ENCODE measurements at regions of chr1 and their contacts with region 1.

Region 1: GRCh38 chr1:207876131-207876530 is 34.8 kb downstream of the CD34 start:
- DNase-seq: no peak
- ATAC-seq: no peak
- H3K4me3 ChIP-seq: no peak overlapping the region
- H3K4me3 Mint-ChIP-seq: no peak overlapping the region
- H3K27ac ChIP-seq: no peak overlapping the region
- H3K27ac Mint-ChIP-seq: no peak overlapping the region
- H3K4me1 ChIP-seq: peaks cover 29 to 30% of the 10 kb centered on the region in 2 donors
- H3K4me1 Mint-ChIP-seq: peaks cover 39% of the 10 kb centered on the region
- H3K27me3 ChIP-seq: no peaks in the 10 kb centered on the region
- H3K27me3 Mint-ChIP-seq: no peaks in the 10 kb centered on the region
- CTCF ChIP-seq: no peak

Region 2: GRCh38 chr1:207628776-207629175 is 247.4 kb before region 1 on chr1:
- CTCF ChIA-PET with region 1: no interaction called
- POLR2A ChIA-PET with region 1: no interaction called
- intact Hi-C with region 1: no loop called
- DNase-seq: no peak
- ATAC-seq: no peak
- H3K4me3 ChIP-seq: no peak overlapping the region
- H3K4me3 Mint-ChIP-seq: no peak overlapping the region
- H3K27ac ChIP-seq: no peak overlapping the region
- H3K27ac Mint-ChIP-seq: no peak overlapping the region
- H3K4me1 ChIP-seq: no peaks in the 10 kb centered on the region
- H3K4me1 Mint-ChIP-seq: no peaks in the 10 kb centered on the region
- H3K27me3 ChIP-seq: no peaks in the 10 kb centered on the region
- H3K27me3 Mint-ChIP-seq: no peaks in the 10 kb centered on the region
- CTCF ChIP-seq: no peak

Region 3: GRCh38 chr1:207811920-207812720 is 64.0 kb before region 1 on chr1:
- CTCF ChIA-PET with region 1: interaction called, 526 read pairs
- POLR2A ChIA-PET with region 1: interaction called, 3 read pairs
- intact Hi-C with region 1: no loop called
- DNase-seq: peak; percentile 31
- ATAC-seq: no peak
- H3K4me3 ChIP-seq: no peak overlapping the region
- H3K4me3 Mint-ChIP-seq: no peak overlapping the region
- H3K27ac ChIP-seq: peak overlapping the region in 1 of 2 donors; percentile 25
- H3K27ac Mint-ChIP-seq: peak overlapping the region; percentile 72
- H3K4me1 ChIP-seq: peaks cover 34 to 46% of the 10 kb centered on the region in 2 donors
- H3K4me1 Mint-ChIP-seq: peaks cover 88% of the 10 kb centered on the region
- H3K27me3 ChIP-seq: no peaks in the 10 kb centered on the region
- H3K27me3 Mint-ChIP-seq: no peaks in the 10 kb centered on the region
- CTCF ChIP-seq: no peak

Region 4: DNA sequence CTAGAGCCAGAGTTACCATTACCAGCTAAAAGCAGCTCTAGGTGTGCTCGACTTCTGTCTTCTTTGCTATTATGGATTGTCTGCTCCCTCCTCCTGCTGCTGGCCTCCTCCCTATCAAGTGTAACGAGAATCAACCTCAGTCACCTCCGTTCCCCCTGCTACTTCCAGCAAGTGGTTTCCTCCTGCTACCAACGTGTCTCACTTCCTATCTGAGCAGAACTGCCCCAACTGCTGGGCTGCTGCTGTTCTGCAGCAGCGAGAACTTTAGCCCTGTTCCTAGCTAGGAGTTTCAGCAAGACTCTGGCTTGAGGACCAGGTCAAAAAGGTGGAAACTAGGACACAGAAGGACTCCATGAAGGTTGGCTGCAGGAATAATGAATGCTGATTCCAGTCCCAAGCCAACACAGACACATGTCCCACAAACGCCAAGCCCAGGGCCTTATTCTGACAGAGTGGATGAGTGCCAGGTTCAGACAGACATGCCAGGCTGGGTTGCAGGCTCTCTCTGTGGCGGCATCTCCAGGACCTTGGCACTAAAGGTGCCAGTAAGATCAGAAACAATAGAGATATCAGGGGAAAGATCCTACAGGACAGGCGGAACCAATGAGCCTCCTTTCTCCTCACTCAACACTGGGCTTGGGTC is 12.1 kb before region 1 on chr1:
- CTCF ChIA-PET with region 1: interaction called, 214 read pairs
- POLR2A ChIA-PET with region 1: no interaction called
- intact Hi-C with region 1: no loop called
- DNase-seq: peak; percentile 66
- ATAC-seq: peak; percentile 56
- H3K4me3 ChIP-seq: no peak overlapping the region
- H3K4me3 Mint-ChIP-seq: peak overlapping the region; percentile 26
- H3K27ac ChIP-seq: peak overlapping the region in 1 of 2 donors; percentile 46
- H3K27ac Mint-ChIP-seq: peak overlapping the region; percentile 54
- H3K4me1 ChIP-seq: peaks cover 49 to 59% of the 10 kb centered on the region in 2 donors
- H3K4me1 Mint-ChIP-seq: peaks cover 62% of the 10 kb centered on the region
- H3K27me3 ChIP-seq: no peaks in the 10 kb centered on the region
- H3K27me3 Mint-ChIP-seq: no peaks in the 10 kb centered on the region
- CTCF ChIP-seq: no peak

Measured in B cell (primary cell).